ENCODE measurements at regions of chr17 and their contacts with region 1.

Region 1: GRCh38 chr17:64129764-64130558 is at the start of gene ERN1:
- DNase-seq: peak; percentile 91 to 99 (median 96)
- ATAC-seq: peak; percentile 94
- H3K4me3 ChIP-seq: peak within 1 kb of the TSS; percentile 69
- H3K27ac ChIP-seq: peak within 1 kb of the TSS; percentile 96
- H3K4me1 ChIP-seq: peaks cover 8 to 52% of the 10 kb centered on the region in 2 donors
- H3K27me3 ChIP-seq: no peaks in the 10 kb centered on the region
- CTCF ChIP-seq: no peak
- polyA plus RNA-seq, gene ERN1: 10.6 to 12.2 (median 10.9) TPM

Region 2: GRCh38 chr17:63919311-63919723 is 210.6 kb before region 1 on chr17:
- intact Hi-C with region 1: loop called in 1 of 2 experiments (anchors 10 kb)
- DNase-seq: peak; percentile 31 to 55 (median 42)
- ATAC-seq: peak; percentile 96
- H3K4me3 ChIP-seq: no peak overlapping the region
- H3K27ac ChIP-seq: no peak overlapping the region
- H3K4me1 ChIP-seq: no peaks in the 10 kb centered on the region
- H3K27me3 ChIP-seq: no peaks in the 10 kb centered on the region
- CTCF ChIP-seq: peak; percentile 93 to 99

Region 3: DNA sequence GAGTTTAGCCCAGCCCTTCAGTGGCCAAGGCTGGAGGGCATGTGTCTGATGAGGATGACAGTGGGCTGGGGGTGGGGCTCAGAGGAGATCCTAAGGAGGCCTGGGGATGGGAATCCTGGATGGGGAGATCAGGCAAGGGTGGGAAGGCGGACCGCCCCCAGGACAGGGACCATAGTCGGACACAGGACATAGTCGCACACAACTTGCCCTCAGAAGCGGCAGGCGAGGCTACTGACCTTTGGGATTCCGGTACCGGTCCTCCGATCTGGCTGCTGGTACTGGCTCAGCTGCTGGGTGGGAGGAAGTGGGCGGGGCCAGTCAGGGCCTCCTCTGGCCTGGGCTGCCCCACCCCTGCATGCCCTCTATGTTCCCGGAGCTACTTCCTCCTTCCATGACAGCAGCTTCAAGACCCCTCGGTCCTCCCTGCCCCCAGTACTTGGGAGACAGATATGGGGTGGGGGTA is 198.8 kb before region 1 on chr17:
- intact Hi-C with region 1: no loop called
- DNase-seq: peak in 3 of 4 donors; percentile 27 to 90 (median 72)
- ATAC-seq: peak; percentile 77
- H3K4me3 ChIP-seq: peak overlapping the region in 1 of 2 donors; percentile 13
- H3K27ac ChIP-seq: peak overlapping the region in 1 of 2 donors; percentile 23
- H3K4me1 ChIP-seq: peaks cover 0 to 19% of the 10 kb centered on the region in 2 donors
- H3K27me3 ChIP-seq: no peaks in the 10 kb centered on the region
- CTCF ChIP-seq: no peak

Region 4: DNA sequence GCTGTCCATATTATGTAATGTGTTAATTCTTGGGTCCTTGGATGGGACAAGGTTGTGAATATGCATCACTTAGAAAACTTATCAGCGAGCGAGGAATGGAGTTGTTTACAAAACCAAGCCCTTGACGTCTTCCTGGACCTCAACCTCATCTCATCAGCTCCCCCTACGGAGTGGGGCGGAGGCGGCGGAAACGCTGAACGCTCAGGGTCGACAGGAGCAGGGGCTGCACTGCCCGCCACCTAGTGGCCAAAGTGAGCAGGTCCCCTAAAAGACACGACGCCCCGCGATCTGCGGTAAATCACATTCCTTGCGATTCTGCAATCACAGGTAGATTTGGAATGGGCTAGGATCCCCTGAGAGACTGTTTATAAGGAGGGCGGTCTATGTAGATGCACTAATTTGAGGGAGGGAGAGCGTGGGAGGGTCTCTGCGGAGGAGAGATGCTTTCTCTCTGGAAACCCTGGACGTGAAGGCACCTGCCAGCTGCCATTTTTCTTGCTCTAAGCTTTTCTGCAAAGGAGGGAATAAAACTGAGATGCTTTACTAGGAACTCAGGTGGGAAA is 104.1 kb before region 1 on chr17:
- intact Hi-C with region 1: loop called in 1 of 2 experiments (anchors 2 kb)
- DNase-seq: peak in 3 of 4 donors; percentile 82 to 93 (median 85)
- ATAC-seq: peak; percentile 83
- H3K4me3 ChIP-seq: no peak overlapping the region
- H3K27ac ChIP-seq: peak overlapping the region in 1 of 2 donors; percentile 38
- H3K4me1 ChIP-seq: peaks cover 9 to 31% of the 10 kb centered on the region in 2 donors
- H3K27me3 ChIP-seq: no peaks in the 10 kb centered on the region
- CTCF ChIP-seq: peak; percentile 92 to 97

Region 5: DNA sequence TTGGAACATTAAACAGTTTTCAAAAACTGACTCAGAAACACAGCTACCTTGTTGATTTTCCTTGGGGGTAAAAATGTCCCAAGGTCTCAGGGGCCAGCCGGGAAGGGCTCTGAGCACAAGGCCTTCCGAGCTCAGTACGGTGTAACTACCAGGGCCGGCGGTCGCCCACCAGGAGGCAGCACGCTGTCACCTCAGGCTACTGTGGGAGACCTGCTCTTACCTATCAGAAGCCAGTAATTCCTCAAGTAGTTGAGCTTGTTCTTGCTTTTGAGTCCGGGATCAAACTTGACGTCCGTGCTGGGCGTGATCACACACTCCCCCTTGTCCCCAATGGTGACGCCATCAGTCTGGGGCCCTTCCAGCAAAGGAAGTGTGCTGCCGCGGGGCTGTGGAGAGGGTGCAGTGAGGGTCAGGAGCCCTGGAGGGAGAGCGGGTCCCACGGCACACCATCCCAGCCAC is 66.2 kb before region 1 on chr17:
- intact Hi-C with region 1: loop called in 1 of 2 experiments (anchors 10 kb)
- DNase-seq: peak; percentile 31 to 94 (median 77)
- ATAC-seq: peak; percentile 94
- H3K4me3 ChIP-seq: no peak overlapping the region
- H3K27ac ChIP-seq: peak overlapping the region in 1 of 2 donors; percentile 58
- H3K4me1 ChIP-seq: peaks cover 0 to 42% of the 10 kb centered on the region in 2 donors
- H3K27me3 ChIP-seq: no peaks in the 10 kb centered on the region
- CTCF ChIP-seq: peak; percentile 33 to 65

Region 6: DNA sequence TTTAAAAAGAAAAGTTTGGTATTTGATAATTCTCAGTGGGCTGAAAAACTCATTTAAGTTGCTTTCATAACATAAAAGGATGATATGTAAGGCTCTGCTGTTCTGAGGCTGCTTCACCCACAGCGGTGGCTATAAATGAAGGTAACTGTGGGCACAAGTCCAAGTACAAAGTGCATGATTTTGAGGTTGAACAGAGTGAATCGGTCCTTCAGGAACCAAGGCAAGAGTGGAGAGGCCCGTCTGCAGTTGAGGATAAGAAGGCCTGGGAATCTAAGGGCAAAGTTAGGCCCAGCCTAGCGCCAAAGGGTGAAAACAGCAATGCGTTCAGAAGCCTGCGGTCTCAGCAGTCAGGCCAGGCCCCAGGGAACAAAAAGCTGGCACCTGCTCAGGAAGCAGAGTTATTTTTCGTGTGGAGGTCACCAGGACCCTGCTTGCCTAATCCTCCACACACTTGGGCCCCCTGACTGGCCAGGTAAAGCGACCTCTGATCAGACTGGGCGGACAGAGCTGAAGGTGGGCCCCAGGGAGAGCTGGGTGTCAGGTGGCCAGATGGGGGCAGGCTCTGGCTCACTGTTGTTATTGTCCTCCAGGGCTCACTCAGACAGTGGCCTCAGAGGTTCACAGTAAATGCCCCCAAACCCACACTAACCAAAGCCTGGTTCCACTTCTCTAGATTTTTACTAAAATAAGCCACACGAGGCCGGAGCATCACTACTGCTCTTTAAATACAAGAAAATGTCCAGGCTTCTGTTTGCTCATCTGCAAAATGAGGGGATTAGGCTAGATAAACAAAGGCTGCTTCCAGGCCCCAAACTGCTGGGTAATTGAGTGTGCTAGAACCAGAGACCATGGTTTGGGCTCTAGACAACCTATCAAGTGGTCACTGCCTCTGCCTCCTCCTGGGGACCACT is 86.6 kb after region 1 on chr17:
- intact Hi-C with region 1: no loop called
- DNase-seq: peak in 1 of 4 donors; percentile 30
- ATAC-seq: peak; percentile 57
- H3K4me3 ChIP-seq: no peak overlapping the region
- H3K27ac ChIP-seq: peak overlapping the region; percentile 23 to 44
- H3K4me1 ChIP-seq: peaks cover 18 to 42% of the 10 kb centered on the region in 2 donors
- H3K27me3 ChIP-seq: no peaks in the 10 kb centered on the region
- CTCF ChIP-seq: no peak

Region 7: GRCh38 chr17:64297467-64298098 is 167.6 kb after region 1 on chr17:
- intact Hi-C with region 1: no loop called
- DNase-seq: no peak
- ATAC-seq: no peak
- H3K4me3 ChIP-seq: no peak overlapping the region
- H3K27ac ChIP-seq: no peak overlapping the region
- H3K4me1 ChIP-seq: peaks cover 2 to 3% of the 10 kb centered on the region in 2 donors
- H3K27me3 ChIP-seq: no peaks in the 10 kb centered on the region
- CTCF ChIP-seq: no peak